Activated T-helper 1 cell treated with anti-CD3 and anti-CD28 coated beads, Interleukin-12 subunit alpha, Interleukin-12 subunit beta, Interleukin-2, Interleukin-4 antibody, amounts not matched to agents 30 ng/mL and 10 ng/mL and 1 ng/mL, durations not matched to agents 14 hours and 24 hours and 36 hours (primary cell): ENCODE measurements at regions of chr9 and their contacts with region 1.

Region 1: DNA sequence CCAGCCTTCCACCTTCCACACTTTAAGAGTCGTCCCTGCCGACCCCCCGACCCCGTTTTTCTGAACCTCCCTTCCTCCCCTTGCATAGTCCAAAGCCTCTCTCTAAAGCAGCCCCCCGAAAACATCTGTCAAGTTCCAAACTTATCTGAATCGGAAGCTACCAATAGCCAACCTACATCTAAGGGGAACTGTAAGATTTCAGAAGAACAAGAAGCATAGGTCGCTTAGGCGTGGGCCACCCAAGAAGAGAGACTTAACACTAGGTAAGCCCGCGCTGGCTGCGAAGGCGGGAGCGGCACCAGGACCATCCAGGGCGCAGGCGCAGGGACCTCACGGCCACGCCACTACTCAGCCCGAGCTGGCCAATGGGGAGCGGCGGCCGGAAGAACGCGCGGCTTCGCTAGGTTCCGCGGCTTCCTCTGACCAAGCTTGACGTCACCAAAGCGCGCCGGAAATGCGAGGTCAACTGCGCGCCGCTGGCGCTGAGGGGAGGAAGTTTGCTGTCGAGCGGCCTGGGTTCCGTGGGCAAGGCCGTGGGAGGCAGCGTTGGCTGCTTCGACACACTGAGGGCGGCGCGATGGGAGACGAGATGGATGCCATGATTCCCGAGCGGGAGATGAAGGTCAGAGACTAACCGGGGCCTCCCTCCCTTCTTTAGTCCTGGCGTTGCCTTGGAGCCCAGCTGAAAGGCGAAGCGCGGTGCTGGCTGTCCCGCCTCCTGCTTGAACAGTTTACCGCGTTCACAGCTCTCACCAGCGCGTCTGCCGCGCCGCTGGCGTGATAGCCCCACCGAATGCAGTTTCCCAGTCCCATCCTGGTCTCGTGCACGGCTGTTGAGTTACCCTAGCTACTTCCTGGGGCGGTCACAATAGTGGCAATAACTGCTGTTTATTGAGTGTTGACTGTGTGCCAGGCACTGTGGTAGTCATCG is at the start of gene NUP214:
- DNase-seq: peak; percentile 99
- H3K4me3 Mint-ChIP-seq: peak within 1 kb of the TSS; percentile 91
- H3K27ac Mint-ChIP-seq: peak within 1 kb of the TSS; percentile 91
- H3K4me1 Mint-ChIP-seq: peaks cover 30% of the 10 kb centered on the region
- H3K27me3 Mint-ChIP-seq: no peaks in the 10 kb centered on the region
- total RNA-seq, gene NUP214: 77.7 and 80.7 TPM in 2 replicates

Region 2: DNA sequence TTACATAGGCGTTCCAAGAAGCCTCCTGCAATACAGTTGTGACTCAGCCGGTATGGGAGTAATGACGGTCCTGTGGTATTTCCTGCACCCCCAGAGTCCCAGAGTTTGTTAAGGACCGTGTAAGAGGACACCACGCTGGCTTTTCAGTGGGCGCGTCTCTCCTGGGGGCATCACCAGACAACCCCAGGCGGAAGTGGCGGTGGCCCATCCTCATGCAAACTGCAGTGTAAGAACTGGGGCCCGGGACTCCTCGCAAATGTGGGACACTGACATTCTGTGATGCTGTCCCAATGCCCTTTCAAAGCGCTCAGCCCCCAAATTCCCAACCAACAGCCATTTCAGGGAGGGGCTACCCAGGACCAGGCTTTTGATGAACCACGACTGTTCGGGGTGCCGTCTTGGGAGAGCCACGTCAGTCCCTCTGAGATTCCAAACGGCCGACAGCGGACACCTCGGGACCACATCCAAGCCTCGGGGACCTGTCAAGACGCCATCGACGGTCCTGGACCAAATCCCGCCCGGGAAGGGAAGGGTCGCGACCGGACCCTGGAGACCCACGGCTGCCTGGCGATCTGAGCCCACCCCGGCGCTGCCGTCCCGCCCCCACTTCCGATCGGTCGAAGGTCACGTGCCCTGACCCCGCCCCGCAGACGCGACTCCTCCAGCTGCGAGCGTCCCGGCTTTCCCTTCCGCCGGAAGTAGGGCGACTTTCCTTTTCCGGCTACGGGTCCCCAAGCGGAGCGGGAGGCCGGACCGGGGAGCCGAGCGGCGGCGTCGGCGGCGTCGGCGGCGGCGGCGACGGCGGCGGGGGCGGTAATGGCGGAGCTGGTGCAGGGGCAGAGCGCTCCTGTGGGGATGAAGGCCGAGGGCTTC is 546.3 kb before region 1 on chr9 and contains the start of gene FUBP3:
- intact Hi-C with region 1: loop called (anchors 10 kb)
- DNase-seq: peak; percentile 89
- H3K4me3 Mint-ChIP-seq: peak within 1 kb of the TSS; percentile 84
- H3K27ac Mint-ChIP-seq: peak within 1 kb of the TSS; percentile 84
- H3K4me1 Mint-ChIP-seq: peaks cover 27% of the 10 kb centered on the region
- H3K27me3 Mint-ChIP-seq: peaks cover 2% of the 10 kb centered on the region
- total RNA-seq, gene FUBP3: 52.6 and 54.6 TPM in 2 replicates

Region 3: GRCh38 chr9:131053896-131054295 is 71.5 kb before region 1 on chr9:
- intact Hi-C with region 1: loop called (anchors 1 kb)
- DNase-seq: no peak
- H3K4me3 Mint-ChIP-seq: no peak overlapping the region
- H3K27ac Mint-ChIP-seq: no peak overlapping the region
- H3K4me1 Mint-ChIP-seq: no peaks in the 10 kb centered on the region
- H3K27me3 Mint-ChIP-seq: no peaks in the 10 kb centered on the region

Region 4: DNA sequence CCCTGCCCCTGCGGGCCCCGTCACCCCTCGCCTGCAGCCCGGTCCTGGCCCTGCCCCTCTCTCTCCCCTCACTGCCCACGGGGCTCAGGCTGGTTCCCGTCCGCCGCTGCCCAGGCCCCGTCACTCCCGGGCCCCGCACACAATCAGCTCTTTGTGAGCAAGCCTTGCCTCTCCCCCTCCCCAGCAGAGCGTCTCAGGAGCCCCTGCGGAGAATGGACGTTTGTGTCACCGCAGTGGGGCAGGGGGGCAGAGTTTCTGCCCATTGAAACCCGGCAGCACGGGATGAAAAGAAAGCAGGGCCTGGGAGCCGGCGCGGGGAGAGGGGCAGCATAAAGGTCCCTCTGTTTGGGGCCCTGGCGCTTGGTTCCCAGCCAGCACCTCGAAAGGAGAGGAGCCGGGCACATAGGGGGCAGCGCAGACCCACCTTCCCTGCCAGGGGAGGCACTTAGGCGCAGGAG is 13.5 kb before region 1 on chr9:
- intact Hi-C with region 1: no loop called
- DNase-seq: no peak
- H3K4me3 Mint-ChIP-seq: no peak overlapping the region
- H3K27ac Mint-ChIP-seq: no peak overlapping the region
- H3K4me1 Mint-ChIP-seq: no peaks in the 10 kb centered on the region
- H3K27me3 Mint-ChIP-seq: peaks cover under 1% of the 10 kb centered on the region

Region 5: DNA sequence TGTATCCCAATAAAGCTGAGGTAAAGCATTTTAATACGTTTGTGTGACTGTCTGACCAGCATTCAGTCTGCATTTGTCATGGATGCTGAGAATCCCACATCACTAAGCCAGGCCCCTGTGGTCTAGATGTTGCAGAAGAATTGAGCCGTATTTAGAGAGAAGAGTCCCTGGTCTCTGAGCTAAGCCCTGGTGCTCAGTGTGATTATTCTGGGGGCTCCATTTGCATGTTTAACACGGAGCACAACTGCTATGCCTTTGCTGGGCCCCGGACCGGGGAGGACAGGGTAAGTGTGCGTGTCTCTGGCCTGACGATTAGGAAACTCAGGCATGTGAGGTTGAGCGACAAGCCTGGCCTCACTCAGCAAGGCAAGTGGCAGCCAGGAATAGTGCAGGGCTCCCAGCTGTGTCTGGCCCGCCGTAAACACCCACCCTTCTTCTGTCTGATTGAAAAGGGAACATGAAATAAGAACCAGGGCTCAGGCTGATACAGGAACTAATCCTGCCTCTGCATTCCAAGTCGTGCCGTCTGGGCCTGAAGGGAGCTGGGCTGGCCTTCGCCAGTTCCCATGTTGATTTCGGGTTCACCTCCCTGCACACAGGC is 128.6 kb after region 1 on chr9:
- intact Hi-C with region 1: loop called (anchors 5 kb)
- DNase-seq: no peak
- H3K4me3 Mint-ChIP-seq: no peak overlapping the region
- H3K27ac Mint-ChIP-seq: peak overlapping the region; percentile 29
- H3K4me1 Mint-ChIP-seq: peaks cover 46% of the 10 kb centered on the region
- H3K27me3 Mint-ChIP-seq: no peaks in the 10 kb centered on the region

Region 6: DNA sequence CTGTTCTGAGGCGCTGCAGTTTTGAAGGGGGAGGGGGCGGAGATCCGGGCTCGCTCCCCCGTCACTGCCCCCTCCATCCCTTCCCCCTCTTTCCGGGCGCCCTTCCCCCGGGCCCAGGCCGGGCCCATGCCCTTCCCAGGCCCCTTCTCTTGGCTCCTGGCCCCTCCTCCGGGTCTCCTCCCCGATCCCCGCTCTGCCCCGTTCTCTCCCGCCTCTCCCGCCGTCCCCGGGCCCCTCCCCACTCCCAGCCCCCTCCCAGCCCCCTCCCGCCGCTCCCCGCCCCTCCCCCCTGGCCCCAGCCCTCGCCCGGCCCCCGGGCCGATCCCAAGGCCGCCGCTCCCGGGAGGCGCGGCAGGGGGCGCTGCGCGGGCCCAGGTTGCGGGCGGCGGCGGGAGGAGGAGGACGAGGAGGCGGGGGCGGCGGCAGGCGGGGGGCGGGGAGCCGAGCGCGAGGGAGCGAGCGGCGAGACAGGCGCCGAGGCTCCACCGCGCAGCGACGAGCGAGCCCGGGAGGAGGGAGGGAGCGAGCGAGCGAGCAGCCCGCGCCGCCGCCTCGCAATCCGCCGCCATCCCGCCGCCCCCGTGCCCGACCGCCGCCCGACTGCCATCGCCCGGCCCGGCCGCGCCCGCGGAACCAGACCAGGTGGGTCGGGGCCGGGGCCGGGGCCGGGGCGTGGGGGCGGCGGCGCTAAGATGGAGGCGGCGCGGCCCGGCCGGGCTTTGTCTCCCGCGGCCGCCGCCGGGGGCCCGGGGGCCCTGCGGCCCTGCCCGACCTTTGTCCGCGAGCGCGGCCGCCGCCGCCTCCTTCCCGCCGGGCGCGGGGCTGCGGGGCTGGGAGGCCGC is 268.4 kb after region 1 on chr9 and contains the start of gene PRRC2B:
- intact Hi-C with region 1: loop called (anchors 1 kb)
- DNase-seq: peak; percentile 76
- H3K4me3 Mint-ChIP-seq: peak within 1 kb of the TSS; percentile 89
- H3K27ac Mint-ChIP-seq: peak within 1 kb of the TSS; percentile 93
- H3K4me1 Mint-ChIP-seq: peaks cover 49% of the 10 kb centered on the region
- H3K27me3 Mint-ChIP-seq: peaks cover 21% of the 10 kb centered on the region
- total RNA-seq, gene PRRC2B: 103 and 108 TPM in 2 replicates

Region 7: GRCh38 chr9:131739980-131740648 is 614.7 kb after region 1 on chr9 and contains the start of gene RAPGEF1:
- intact Hi-C with region 1: loop called (anchors 10 kb)
- DNase-seq: peak; percentile 84
- H3K4me3 Mint-ChIP-seq: peak within 1 kb of the TSS; percentile 92
- H3K27ac Mint-ChIP-seq: peak within 1 kb of the TSS; percentile 85
- H3K4me1 Mint-ChIP-seq: peaks cover 62% of the 10 kb centered on the region
- H3K27me3 Mint-ChIP-seq: no peaks in the 10 kb centered on the region
- total RNA-seq, gene RAPGEF1: 168 and 172 TPM in 2 replicates

Region 8: DNA sequence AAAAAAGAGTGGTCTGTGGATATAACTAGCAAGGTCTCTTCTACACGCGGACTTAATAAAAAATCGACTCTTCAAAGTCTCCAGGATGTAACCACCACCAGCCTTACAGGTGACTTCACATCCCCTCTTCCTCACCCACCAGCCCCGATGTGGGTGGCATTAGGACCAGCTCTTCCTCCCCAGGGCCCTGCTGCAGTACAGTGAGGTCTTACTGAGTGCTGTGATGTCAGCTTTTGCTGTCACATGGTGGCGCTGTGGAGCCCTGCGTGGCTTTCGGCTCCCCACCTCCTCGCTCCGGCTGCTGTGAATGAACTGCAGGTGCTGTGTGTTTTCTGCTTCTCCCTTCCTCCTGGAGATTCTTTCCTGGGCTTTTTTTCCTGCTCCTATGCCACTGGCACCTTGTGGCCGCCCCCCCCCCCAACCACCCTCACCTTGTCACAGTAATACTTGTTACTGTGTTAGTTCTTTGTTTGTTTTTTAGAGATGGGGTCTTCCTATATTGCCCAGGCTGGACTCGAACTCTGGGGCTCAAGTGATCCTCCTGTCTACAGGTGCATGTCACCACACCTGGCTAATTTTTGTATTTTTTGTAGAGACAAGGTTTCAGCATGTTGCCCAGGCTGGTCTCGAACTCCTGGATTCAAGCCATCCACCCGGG is 630.3 kb after region 1 on chr9:
- intact Hi-C with region 1: no loop called
- DNase-seq: peak; percentile 76
- H3K4me3 Mint-ChIP-seq: no peak overlapping the region
- H3K27ac Mint-ChIP-seq: peak overlapping the region; percentile 29
- H3K4me1 Mint-ChIP-seq: peaks cover 21% of the 10 kb centered on the region
- H3K27me3 Mint-ChIP-seq: peaks cover 32% of the 10 kb centered on the region

Region 9: DNA sequence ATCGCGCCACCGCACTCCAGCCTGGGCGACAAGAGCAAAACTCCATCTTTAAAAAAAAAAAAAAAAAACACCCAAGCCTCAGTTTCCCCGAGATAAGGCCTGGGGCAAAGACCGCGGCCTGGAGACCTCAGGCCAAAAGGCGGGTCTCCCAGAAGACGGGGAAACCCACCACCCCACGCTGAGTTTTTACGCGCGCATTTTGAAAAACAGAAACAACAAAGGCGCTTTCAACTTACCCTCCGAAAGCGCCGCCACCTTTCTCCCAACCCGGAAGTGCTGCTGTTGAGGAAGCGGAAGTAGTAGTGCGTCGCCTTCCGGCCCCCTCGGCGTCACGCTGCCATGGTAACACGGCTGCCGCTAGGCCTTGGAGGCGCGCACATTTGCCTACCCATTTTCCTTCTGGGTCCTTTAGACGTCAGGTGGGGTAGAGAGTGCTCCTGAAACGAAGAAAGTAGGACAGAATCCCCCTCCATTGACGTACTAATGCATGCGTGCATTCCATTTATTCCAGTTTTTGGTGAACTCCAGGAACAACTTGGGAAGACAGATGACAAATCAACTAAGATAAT is 1281.2 kb after region 1 on chr9 and contains the start of gene TTF1:
- intact Hi-C with region 1: loop called (anchors 2 kb)
- DNase-seq: peak; percentile 91
- H3K4me3 Mint-ChIP-seq: peak within 1 kb of the TSS; percentile 87
- H3K27ac Mint-ChIP-seq: peak within 1 kb of the TSS; percentile 91
- H3K4me1 Mint-ChIP-seq: peaks cover 52% of the 10 kb centered on the region
- H3K27me3 Mint-ChIP-seq: peaks cover 16% of the 10 kb centered on the region
- total RNA-seq, gene TTF1: 33.1 and 33.3 TPM in 2 replicates